Naive thymus-derived CD4-positive, alpha-beta T cell (primary cell): ENCODE measurements at regions of chr4 and their contacts with region 1.

Region 1: DNA sequence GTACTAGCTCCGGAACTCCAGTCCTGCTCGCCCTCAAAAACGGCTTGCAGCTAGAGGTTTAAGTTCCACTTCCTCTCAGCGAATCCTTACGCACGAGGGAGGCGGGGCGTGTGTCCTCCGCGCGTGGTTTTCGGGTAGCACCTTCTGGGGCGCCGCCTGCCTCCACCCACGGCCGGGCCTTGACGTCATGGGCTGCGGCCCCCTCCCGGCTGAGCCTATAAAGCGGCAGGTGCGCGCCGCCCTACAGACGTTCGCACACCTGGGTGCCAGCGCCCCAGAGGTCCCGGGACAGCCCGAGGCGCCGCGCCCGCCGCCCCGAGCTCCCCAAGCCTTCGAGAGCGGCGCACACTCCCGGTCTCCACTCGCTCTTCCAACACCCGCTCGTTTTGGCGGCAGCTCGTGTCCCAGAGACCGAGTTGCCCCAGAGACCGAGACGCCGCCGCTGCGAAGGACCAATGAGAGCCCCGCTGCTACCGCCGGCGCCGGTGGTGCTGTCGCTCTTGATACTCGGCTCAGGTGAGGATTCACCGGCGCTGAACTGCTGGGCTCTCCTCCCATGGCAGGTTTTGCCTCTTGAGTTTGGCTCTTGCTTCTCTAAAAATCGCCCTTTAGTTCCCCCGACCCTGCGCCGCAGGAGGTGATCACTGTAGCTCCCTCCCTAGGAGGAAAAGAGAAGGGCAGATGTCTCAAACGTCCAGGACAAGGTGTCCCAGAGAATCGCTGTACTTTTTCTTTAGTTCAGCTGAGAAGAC is at the start of gene AREG:
- DNase-seq: peak; percentile 85 to 96 (median 94)
- ATAC-seq: peak; percentile 97
- H3K4me3 ChIP-seq: peak within 1 kb of the TSS; percentile 63
- H3K4me3 Mint-ChIP-seq: peak within 1 kb of the TSS; percentile 84 to 96 (median 92)
- H3K27ac ChIP-seq: peak within 1 kb of the TSS; percentile 93
- H3K27ac Mint-ChIP-seq: peak within 1 kb of the TSS; percentile 74 to 99 (median 97)
- H3K4me1 ChIP-seq: peaks cover 0 to 6% of the 10 kb centered on the region in 2 donors
- H3K4me1 Mint-ChIP-seq: peaks cover 4 to 15% (median 14%) of the 10 kb centered on the region in 7 donors
- H3K27me3 ChIP-seq: no peaks in the 10 kb centered on the region
- H3K27me3 Mint-ChIP-seq: peaks cover 0 to 13% (median 0%) of the 10 kb centered on the region in 5 donors
- total RNA-seq, gene AREG: 0.36 to 30.5 (median 6.7) TPM in 4 of 5 experiments, not detected in the other

Region 2: DNA sequence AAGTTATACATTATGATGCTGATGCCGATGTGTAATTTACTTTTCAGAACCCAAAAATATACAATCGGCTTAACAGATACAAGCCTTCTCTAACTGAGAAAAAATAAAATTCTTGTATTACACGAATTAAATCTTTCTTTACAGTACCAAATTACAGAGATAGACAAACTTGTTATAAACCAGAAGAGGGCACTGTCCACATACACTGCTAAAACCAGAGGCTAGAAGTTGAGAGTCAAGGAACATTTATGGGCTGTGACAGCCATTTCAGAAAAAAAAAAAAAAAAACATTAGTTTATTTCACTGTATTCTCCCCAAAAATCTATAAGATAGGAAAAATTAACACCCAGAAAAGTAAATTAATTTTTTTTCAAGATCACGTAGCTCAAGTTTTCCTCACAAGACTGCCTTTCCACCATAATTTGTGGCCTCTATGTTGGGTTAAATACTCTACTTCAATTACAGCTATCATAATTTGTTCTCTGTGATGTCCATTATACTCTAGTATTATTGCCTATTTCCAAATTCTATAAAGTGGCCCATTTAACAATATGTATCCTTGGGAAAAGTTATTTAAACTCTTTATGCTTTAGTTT is 68.1 kb before region 1 on chr4:
- CTCF ChIA-PET with region 1: interaction called, 3 read pairs
- POLR2A ChIA-PET with region 1: no interaction called
- intact Hi-C with region 1: loop called in 1 of 2 experiments (anchors 1 kb)
- DNase-seq: peak in 7 of 9 donors; percentile 25 to 60 (median 48)
- ATAC-seq: peak; percentile 73
- H3K4me3 ChIP-seq: no peak overlapping the region
- H3K4me3 Mint-ChIP-seq: no peak overlapping the region
- H3K27ac ChIP-seq: no peak overlapping the region
- H3K27ac Mint-ChIP-seq: no peak overlapping the region
- H3K4me1 ChIP-seq: no peaks in the 10 kb centered on the region
- H3K4me1 Mint-ChIP-seq: no peaks in the 10 kb centered on the region
- H3K27me3 ChIP-seq: no peaks in the 10 kb centered on the region
- H3K27me3 Mint-ChIP-seq: peaks cover 0 to 16% (median 8%) of the 10 kb centered on the region in 5 donors

Region 3: GRCh38 chr4:74531963-74532794 is 87.1 kb after region 1 on chr4:
- CTCF ChIA-PET with region 1: no interaction called
- POLR2A ChIA-PET with region 1: no interaction called
- intact Hi-C with region 1: loop called in 1 of 2 experiments (anchors 2 kb)
- DNase-seq: peak in 6 of 9 donors; percentile 2 to 34 (median 24)
- ATAC-seq: peak; percentile 74
- H3K4me3 ChIP-seq: no peak overlapping the region
- H3K4me3 Mint-ChIP-seq: no peak overlapping the region
- H3K27ac ChIP-seq: no peak overlapping the region
- H3K27ac Mint-ChIP-seq: no peak overlapping the region
- H3K4me1 ChIP-seq: no peaks in the 10 kb centered on the region
- H3K4me1 Mint-ChIP-seq: peaks cover 0 to 2% (median 0%) of the 10 kb centered on the region in 7 donors
- H3K27me3 ChIP-seq: no peaks in the 10 kb centered on the region
- H3K27me3 Mint-ChIP-seq: peaks cover 0 to 22% (median 11%) of the 10 kb centered on the region in 5 donors

Region 4: DNA sequence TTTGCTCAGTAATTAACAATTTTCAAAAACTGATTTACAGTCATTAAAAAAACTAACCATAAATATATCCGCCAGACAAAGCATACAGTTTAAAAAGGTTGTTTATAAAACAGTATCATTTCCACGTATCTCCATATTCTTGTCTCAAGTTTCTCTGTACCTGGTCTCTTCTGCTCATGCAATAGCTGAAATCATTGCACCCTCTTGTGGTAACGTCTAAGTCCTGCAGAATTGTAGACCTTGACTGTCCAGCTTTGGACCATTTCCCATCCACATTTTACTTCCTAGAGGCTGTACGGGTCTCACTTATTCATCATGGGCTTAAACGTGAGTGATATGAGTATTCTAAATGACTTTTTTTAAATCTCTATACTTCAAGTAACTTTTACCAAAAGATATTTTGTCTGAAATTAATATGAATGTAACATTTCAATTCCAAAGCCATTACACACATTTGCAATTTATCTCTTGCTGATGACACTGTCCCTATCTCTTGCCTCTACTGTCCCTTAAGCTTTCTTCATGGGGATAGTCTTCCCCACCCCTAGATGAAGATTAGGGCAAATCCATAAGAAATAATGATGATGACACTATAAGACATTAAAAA is 230.7 kb after region 1 on chr4:
- CTCF ChIA-PET with region 1: no interaction called
- POLR2A ChIA-PET with region 1: no interaction called
- intact Hi-C with region 1: loop called in 1 of 2 experiments (anchors 2 kb)
- DNase-seq: peak in 5 of 9 donors; percentile 26 to 31 (median 30)
- ATAC-seq: peak; percentile 70
- H3K4me3 ChIP-seq: no peak overlapping the region
- H3K4me3 Mint-ChIP-seq: peak overlapping the region in 1 of 10 donors; percentile 1
- H3K27ac ChIP-seq: no peak overlapping the region
- H3K27ac Mint-ChIP-seq: no peak overlapping the region
- H3K4me1 ChIP-seq: no peaks in the 10 kb centered on the region
- H3K4me1 Mint-ChIP-seq: peaks cover 0 to 12% (median 10%) of the 10 kb centered on the region in 7 donors
- H3K27me3 ChIP-seq: no peaks in the 10 kb centered on the region
- H3K27me3 Mint-ChIP-seq: peaks cover 10 to 28% (median 14%) of the 10 kb centered on the region in 5 donors

Region 5: GRCh38 chr4:74904509-74905065 is 459.5 kb after region 1 on chr4:
- CTCF ChIA-PET with region 1: no interaction called
- POLR2A ChIA-PET with region 1: no interaction called
- intact Hi-C with region 1: no loop called
- DNase-seq: no peak
- ATAC-seq: no peak
- H3K4me3 ChIP-seq: no peak overlapping the region
- H3K4me3 Mint-ChIP-seq: no peak overlapping the region
- H3K27ac ChIP-seq: no peak overlapping the region
- H3K27ac Mint-ChIP-seq: no peak overlapping the region
- H3K4me1 ChIP-seq: no peaks in the 10 kb centered on the region
- H3K4me1 Mint-ChIP-seq: no peaks in the 10 kb centered on the region
- H3K27me3 ChIP-seq: peaks cover 0 to 3% of the 10 kb centered on the region in 2 donors
- H3K27me3 Mint-ChIP-seq: peaks cover 0 to 9% (median 3%) of the 10 kb centered on the region in 5 donors

Region 6: GRCh38 chr4:75673027-75673958 is 1228.2 kb after region 1 on chr4 and contains the start of gene G3BP2:
- CTCF ChIA-PET with region 1: no interaction called
- POLR2A ChIA-PET with region 1: no interaction called
- intact Hi-C with region 1: loop called in 1 of 2 experiments (anchors 10 kb)
- DNase-seq: peak; percentile 87 to 99 (median 97)
- ATAC-seq: peak; percentile 97
- H3K4me3 ChIP-seq: peak within 1 kb of the TSS; percentile 91
- H3K4me3 Mint-ChIP-seq: peak within 1 kb of the TSS; percentile 96 to 100 (median 98)
- H3K27ac ChIP-seq: peak within 1 kb of the TSS; percentile 96
- H3K27ac Mint-ChIP-seq: peak within 1 kb of the TSS; percentile 92 to 100 (median 99)
- H3K4me1 ChIP-seq: peaks cover 38 to 43% of the 10 kb centered on the region in 2 donors
- H3K4me1 Mint-ChIP-seq: peaks cover 36 to 47% (median 44%) of the 10 kb centered on the region in 7 donors
- H3K27me3 ChIP-seq: no peaks in the 10 kb centered on the region
- H3K27me3 Mint-ChIP-seq: no peaks in the 10 kb centered on the region
- total RNA-seq, gene G3BP2: 161 to 299 (median 167) TPM